ENCODE measurements at regions of chr4 and their contacts with region 1.

Region 1: DNA sequence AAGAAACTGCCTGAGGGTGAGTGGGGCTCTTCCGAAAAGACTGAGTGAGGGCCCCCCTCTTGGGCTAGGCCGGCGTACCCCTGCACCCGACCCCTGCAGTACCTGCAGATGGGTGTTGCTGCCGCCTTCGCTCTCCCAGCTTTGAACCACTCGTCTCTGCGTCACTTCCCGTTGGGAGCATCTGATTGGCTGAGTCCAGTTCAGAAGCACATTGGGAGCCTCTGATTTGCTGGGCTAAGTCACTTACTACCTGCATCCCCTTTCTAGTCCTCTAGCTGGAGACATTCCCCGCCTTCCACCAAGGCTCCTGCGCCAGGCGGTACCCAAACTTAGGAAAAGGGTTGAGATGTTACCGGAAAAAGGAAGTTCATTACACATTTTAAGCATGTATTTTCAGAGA is 20.4 kb upstream of the WWC2 start:
- DNase-seq: no peak
- ATAC-seq: no peak

Region 2: GRCh38 chr4:183130328-183131173 is 51.9 kb after region 1 on chr4:
- intact Hi-C with region 1: no loop called
- DNase-seq: no peak
- ATAC-seq: no peak

Region 3: DNA sequence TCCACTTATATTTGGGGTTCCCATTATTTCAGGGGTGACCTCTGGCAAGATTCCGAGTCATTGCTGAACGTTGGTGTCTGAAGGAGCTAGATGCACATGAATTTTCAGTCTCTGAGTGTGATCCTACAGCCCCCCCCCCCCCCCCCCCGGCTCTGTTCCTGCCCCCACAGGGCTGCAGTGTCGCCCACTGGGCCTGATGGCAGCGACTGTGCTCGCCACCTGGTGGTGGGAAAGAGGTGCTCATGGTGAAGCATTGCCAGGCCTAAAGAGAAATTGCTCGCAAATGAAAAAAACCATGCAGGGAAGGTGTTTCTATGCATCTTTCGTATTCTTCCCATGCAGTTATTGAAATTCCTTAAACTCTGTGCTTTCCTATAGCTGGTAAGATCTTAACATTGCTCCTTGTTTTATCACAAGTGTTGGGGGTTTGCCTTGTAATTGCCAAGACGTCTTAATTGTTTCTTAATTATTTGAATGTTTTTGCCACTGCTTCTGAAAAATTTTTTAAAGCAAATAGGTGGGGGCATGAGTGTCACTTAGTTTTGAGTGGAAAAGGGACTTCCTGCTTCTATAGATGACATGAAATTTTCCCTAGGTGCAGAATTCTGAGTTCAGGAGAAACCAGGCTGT is 178.2 kb after region 1 on chr4:
- intact Hi-C with region 1: loop called (anchors 2 kb)
- DNase-seq: peak; percentile 79
- ATAC-seq: peak; percentile 93

Measured in sciatic nerve (tissue), 2 donors.